ENCODE measurements at regions of chr3 and their contacts with region 1.

Region 1: GRCh38 chr3:152235709-152236298 is 32.9 kb upstream of the MBNL1 start:
- DNase-seq: no peak
- ATAC-seq: no peak
- H3K4me3 ChIP-seq: no peak overlapping the region
- H3K4me3 Mint-ChIP-seq: peak overlapping the region; percentile 42
- H3K27ac ChIP-seq: no peak overlapping the region
- H3K27ac Mint-ChIP-seq: peak overlapping the region; percentile 86
- H3K4me1 ChIP-seq: peaks cover 20% of the 10 kb centered on the region
- H3K4me1 Mint-ChIP-seq: peaks cover 89% of the 10 kb centered on the region
- H3K27me3 ChIP-seq: no peaks in the 10 kb centered on the region
- H3K27me3 Mint-ChIP-seq: no peaks in the 10 kb centered on the region
- CTCF ChIP-seq: no peak

Region 2: GRCh38 chr3:151890721-151891141 is 345.1 kb before region 1 on chr3:
- CTCF ChIA-PET with region 1: no interaction called
- POLR2A ChIA-PET with region 1: no interaction called
- intact Hi-C with region 1: no loop called
- DNase-seq: peak in 1 of 14 experiments; percentile 52
- ATAC-seq: no peak
- H3K4me3 ChIP-seq: no peak overlapping the region
- H3K4me3 Mint-ChIP-seq: no peak overlapping the region
- H3K27ac ChIP-seq: no peak overlapping the region
- H3K27ac Mint-ChIP-seq: no peak overlapping the region
- H3K4me1 ChIP-seq: peaks cover 6% of the 10 kb centered on the region
- H3K4me1 Mint-ChIP-seq: peaks cover 18% of the 10 kb centered on the region
- H3K27me3 ChIP-seq: no peaks in the 10 kb centered on the region
- H3K27me3 Mint-ChIP-seq: no peaks in the 10 kb centered on the region
- CTCF ChIP-seq: no peak

Region 3: GRCh38 chr3:152222327-152222726 is 13.5 kb before region 1 on chr3:
- CTCF ChIA-PET with region 1: interaction called, 7 read pairs
- POLR2A ChIA-PET with region 1: interaction called, 12 read pairs
- intact Hi-C with region 1: loop called in 1 of 2 experiments (anchors 2 kb)
- DNase-seq: no peak
- ATAC-seq: peak; percentile 51
- H3K4me3 ChIP-seq: no peak overlapping the region
- H3K4me3 Mint-ChIP-seq: peak overlapping the region; percentile 77
- H3K27ac ChIP-seq: no peak overlapping the region
- H3K27ac Mint-ChIP-seq: peak overlapping the region; percentile 83
- H3K4me1 ChIP-seq: peaks cover 14% of the 10 kb centered on the region
- H3K4me1 Mint-ChIP-seq: peaks cover 69% of the 10 kb centered on the region
- H3K27me3 ChIP-seq: no peaks in the 10 kb centered on the region
- H3K27me3 Mint-ChIP-seq: no peaks in the 10 kb centered on the region
- CTCF ChIP-seq: no peak